Motor neuron (in vitro differentiated cells): ENCODE measurements at regions of chr10 and their contacts with region 1.

Region 1: GRCh38 chr10:116787893-116788665 is 45.7 kb upstream of the HSPA12A start:
- ATAC-seq: peak; percentile 79 to 95 (median 92)
- H3K4me3 ChIP-seq: peak overlapping the region in 2 of 5 donors; percentile 14 to 21
- H3K27ac ChIP-seq: no peak overlapping the region
- H3K4me1 ChIP-seq: peaks cover 4 to 10% of the 10 kb centered on the region in 2 donors

Region 2: DNA sequence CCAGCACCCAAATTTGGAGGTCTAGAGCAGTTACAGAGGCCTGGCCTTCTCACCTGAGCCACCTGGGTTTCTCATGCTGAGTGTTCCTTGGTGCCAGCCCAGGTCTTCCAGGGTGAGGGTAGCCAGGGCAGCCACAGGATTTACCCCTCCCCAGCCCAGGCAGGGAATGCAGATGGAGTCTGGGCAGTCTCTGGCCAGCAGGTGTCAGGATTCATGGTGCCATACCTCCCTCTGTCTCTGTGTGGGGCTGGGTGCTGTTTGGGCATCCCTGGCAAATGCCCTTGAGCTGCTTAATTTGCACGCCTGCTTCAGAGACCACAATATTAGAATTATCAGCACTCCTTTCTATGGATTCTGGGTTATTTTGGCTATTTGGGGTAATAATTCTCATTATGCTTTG is 761.8 kb before region 1 on chr10:
- in situ Hi-C with region 1: no loop called
- ATAC-seq: peak in 1 of 8 experiments; percentile 39
- H3K4me3 ChIP-seq: no peak overlapping the region
- H3K27ac ChIP-seq: no peak overlapping the region
- H3K4me1 ChIP-seq: peaks cover 0 to 9% of the 10 kb centered on the region in 2 donors

Region 3: DNA sequence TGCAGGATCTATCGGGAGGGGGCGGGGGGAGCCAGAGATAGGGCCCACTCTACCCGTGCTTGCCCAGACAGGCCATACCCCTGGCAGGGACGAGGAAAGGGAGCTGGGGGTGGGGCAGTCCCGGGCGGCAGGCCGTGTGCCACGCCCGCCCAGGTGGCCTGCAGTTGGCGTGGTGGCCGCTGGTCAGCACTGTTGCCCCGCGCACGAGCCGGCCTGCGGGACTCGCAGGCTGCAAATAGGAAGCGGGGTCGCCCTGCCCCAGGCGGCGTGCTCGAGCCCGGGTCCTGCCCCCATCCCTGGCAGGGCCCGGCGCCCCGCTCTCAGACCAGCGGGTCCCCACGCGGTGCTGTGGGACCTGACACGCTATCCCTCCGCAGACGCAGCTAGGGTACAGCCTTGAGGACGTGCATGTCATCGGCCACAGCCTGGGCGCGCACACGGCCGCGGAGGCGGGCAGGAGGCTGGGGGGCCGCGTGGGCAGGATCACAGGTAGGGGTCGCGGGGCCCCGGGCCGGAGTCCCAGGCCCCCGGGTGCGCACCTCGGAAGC is 160.6 kb before region 1 on chr10:
- in situ Hi-C with region 1: loop called in 1 of 9 experiments (anchors 10 kb)
- ATAC-seq: peak; percentile 96 to 99 (median 97)
- H3K4me3 ChIP-seq: peak overlapping the region; percentile 22 to 39 (median 30)
- H3K27ac ChIP-seq: no peak overlapping the region
- H3K4me1 ChIP-seq: peaks cover 2 to 4% of the 10 kb centered on the region in 2 donors

Region 4: DNA sequence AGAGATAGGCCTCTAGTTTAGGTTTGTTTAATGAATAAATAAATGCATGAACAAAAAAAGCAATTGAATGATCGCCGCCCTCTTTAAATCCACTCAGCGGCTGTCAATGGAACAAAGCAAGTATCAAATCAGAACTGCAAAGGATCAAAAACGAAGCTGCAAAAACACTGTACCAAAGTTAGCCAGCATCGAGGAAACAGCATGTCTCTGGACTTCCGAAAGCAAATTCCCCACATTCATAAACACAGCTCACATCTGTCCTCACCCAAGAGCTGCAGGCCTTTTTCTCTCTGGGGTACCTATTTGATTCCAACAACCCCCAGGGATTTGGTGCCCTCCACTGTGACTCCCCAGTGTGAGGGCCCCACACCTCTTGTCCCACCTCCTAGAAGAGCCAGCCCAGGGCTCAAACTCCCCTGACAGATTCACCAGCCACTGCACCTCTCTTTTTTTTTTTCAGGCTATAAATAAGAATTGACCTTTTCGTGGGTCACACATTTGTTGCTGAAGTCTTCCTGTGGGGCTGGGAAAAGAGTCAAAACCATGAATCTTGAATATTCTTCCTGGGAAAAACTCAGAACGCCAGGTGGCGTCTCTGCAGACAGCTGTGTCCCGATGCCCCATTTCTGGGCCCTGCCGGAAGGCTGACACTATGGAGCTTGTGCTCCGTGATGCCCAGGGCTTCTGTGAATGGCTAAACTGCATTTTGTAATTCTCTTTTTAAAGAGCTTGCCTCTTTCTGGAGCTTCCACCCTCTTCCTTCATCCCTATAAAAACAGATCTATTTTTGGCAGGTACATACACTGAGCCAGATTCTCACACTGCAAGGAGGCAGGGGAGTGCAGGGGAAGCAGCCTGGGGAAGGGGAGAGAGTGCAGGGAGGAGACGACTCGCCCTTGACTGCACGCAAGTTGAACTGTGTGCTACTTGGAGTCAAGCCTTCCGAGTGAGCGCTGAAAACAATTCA is 97.4 kb before region 1 on chr10:
- in situ Hi-C with region 1: loop called in 5 of 9 experiments (anchors 10 to 25 kb)
- ATAC-seq: peak in 5 of 8 experiments; percentile 40 to 52 (median 48)
- H3K4me3 ChIP-seq: no peak overlapping the region
- H3K27ac ChIP-seq: no peak overlapping the region
- H3K4me1 ChIP-seq: peaks cover 10 to 11% of the 10 kb centered on the region in 2 donors

Region 5: GRCh38 chr10:117217196-117217761 is 429.2 kb after region 1 on chr10:
- in situ Hi-C with region 1: no loop called
- ATAC-seq: peak in 3 of 8 experiments; percentile 56 to 69 (median 64)
- H3K4me3 ChIP-seq: peak overlapping the region; percentile 28 to 45 (median 33)
- H3K27ac ChIP-seq: no peak overlapping the region
- H3K4me1 ChIP-seq: peaks cover 5 to 6% of the 10 kb centered on the region in 2 donors